A549 (cell line): ENCODE measurements at regions of chr17 and their contacts with region 1.

Region 1: GRCh38 chr17:3907483-3908216 is 8.6 kb downstream of the P2RX1 start:
- DNase-seq: peak in 1 of 2 experiments; percentile 40
- ATAC-seq: peak; percentile 37 to 48; a peak in 4 of 6 replicates
- H3K4me3 ChIP-seq: no peak overlapping the region
- H3K27ac ChIP-seq: no peak overlapping the region
- H3K4me1 ChIP-seq: no peaks in the 10 kb centered on the region
- CTCF ChIP-seq: peak; percentile 52
- EP300 ChIP-seq: no peak
- POLR2A ChIP-seq: no peak
- RAD21 ChIP-seq: peak; percentile 72 to 83

Region 2: GRCh38 chr17:3879186-3879585 is 28.5 kb before region 1 on chr17:
- CTCF ChIA-PET with region 1: interaction called, 31 read pairs
- POLR2A ChIA-PET with region 1: no interaction called
- DNase-seq: no peak
- ATAC-seq: peak in 1 of 2 experiments; percentile 12; a peak in 1 of 6 replicates
- H3K4me3 ChIP-seq: no peak overlapping the region
- H3K27ac ChIP-seq: no peak overlapping the region
- H3K4me1 ChIP-seq: no peaks in the 10 kb centered on the region
- CTCF ChIP-seq: no peak
- EP300 ChIP-seq: no peak
- POLR2A ChIP-seq: no peak
- RAD21 ChIP-seq: no peak

Region 3: DNA sequence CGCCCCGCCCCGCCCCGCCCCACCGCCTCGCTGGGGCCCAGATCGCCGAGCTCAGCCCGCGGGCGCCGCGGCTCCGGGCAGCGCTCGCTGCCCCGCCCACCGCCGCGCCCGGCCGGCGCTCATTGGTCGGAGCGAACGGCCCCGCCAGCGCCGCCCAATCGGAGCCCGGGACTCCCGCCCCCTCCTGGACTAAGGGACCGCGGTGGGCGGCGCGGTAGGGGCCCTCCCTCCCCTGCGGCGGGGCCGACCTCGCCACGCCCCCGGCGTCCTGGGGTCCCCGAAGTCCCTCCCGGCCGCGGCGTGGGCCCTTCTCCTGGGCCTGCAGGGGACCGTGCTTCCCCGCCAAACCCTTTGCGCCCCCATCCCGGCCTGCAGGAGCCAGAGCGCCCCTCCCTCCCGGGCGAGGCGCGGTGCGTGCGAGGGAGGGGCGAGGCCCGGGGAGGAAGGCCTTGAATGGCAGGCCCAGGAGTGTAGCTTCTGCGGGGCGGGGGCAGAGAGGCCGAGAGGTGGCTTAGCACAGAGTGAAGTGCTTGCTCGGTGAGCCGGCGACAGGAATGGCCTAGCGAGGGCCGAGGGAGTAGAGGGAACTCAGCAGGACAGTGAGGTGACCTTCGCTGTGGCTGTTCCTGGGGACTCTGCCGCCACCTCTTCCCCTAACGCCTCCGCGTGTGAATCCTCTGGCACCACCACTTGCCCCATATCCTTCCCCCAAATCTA is 14.5 kb before region 1 on chr17 and contains the start of gene CAMKK1:
- CTCF ChIA-PET with region 1: interaction called, 256 read pairs
- POLR2A ChIA-PET with region 1: interaction called, 3 read pairs
- DNase-seq: peak; percentile 86 to 98
- ATAC-seq: peak; percentile 57 to 78
- H3K4me3 ChIP-seq: peak within 1 kb of the TSS; percentile 79
- H3K27ac ChIP-seq: peak within 1 kb of the TSS; percentile 87 to 89
- H3K4me1 ChIP-seq: peaks cover 54% of the 10 kb centered on the region
- CTCF ChIP-seq: no peak
- EP300 ChIP-seq: no peak
- POLR2A ChIP-seq: peak; percentile 15; the same call in 1 of the 2 replicates
- RAD21 ChIP-seq: no peak
- polyA plus RNA-seq, gene CAMKK1: 6.9 and 7.7 TPM in 2 replicates